Transverse colon (tissue), 4 donors: ENCODE measurements at regions of chr17 and their contacts with region 1.

Region 1: DNA sequence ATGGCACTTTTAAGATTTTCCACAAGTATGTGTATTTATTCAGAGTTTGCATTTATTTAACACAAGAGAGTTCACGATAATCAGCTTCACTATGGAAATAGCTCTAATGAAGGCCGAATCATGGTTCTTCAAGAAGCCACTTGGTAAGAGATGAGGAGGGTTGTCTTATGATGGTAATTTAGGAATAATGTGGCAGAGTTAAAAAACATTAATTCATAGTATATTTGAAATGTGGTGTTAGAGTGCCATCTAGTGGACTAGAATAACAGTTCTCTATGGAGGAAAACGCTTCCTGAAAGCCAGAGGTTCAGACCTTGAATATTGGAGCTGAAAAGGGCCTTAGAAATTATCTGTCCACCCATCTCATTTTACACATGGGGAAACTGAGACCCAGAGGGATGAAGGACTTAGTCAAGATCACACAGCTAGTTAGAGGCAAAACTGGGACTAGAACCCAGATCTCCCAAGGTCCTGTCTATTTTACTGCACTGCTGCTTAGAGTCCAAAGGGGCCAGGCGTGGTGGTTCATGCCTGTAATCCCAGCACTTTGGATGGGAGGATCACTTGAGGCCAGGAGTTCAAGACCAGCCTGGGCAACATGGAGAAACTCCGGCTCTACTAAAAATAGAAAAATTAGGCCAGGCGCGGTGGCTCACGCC is 33.8 kb upstream of the KPNB1 start:
- DNase-seq: no peak
- H3K4me3 ChIP-seq: no peak overlapping the region
- H3K27ac ChIP-seq: peak overlapping the region in 1 of 4 donors; percentile 15
- H3K4me1 ChIP-seq: no peaks in the 10 kb centered on the region
- H3K27me3 ChIP-seq: no peaks in the 10 kb centered on the region
- CTCF ChIP-seq: peak; percentile 76 to 81 (median 78)
- EP300 ChIP-seq: no peak
- POLR2A ChIP-seq: no peak

Region 2: GRCh38 chr17:47368262-47368661 is 247.6 kb before region 1 on chr17:
- in situ Hi-C with region 1: loop called in 2 of 4 experiments (anchors 25 kb)
- intact Hi-C with region 1: no loop called
- DNase-seq: no peak
- H3K4me3 ChIP-seq: no peak overlapping the region
- H3K27ac ChIP-seq: no peak overlapping the region
- H3K4me1 ChIP-seq: no peaks in the 10 kb centered on the region
- H3K27me3 ChIP-seq: no peaks in the 10 kb centered on the region
- CTCF ChIP-seq: no peak
- EP300 ChIP-seq: no peak
- POLR2A ChIP-seq: no peak

Region 3: DNA sequence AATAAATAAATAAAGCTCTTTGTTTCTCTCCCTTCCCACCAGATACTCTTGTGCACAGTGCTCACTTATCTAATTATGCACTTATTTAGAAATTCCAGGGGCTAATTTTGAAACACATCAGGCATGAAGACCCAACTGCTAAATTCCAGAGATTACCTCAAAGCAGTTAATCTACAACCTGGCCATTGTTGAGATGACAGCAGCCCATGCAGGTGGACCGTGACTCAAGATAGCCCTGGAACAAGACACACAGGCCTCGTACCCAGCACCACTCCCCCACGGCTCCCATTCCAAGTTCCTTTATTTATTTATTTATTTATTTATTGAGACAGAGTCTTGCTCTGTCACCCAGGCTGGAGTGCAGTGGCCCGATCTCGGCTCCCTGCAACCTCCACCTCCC is 145.1 kb before region 1 on chr17:
- in situ Hi-C with region 1: loop called in 1 of 4 experiments (anchors 25 kb)
- intact Hi-C with region 1: no loop called
- DNase-seq: no peak
- H3K4me3 ChIP-seq: no peak overlapping the region
- H3K27ac ChIP-seq: no peak overlapping the region
- H3K4me1 ChIP-seq: no peaks in the 10 kb centered on the region
- H3K27me3 ChIP-seq: no peaks in the 10 kb centered on the region
- CTCF ChIP-seq: no peak
- EP300 ChIP-seq: no peak
- POLR2A ChIP-seq: no peak